ENCODE measurements at regions of chr16 and their contacts with region 1.

Region 1: GRCh38 chr16:2267913-2268666 is at the start of gene RNPS1:
- DNase-seq: peak; percentile 93 to 98 (median 96)
- ATAC-seq: peak; percentile 92
- H3K4me3 ChIP-seq: peak within 1 kb of the TSS; percentile 99
- H3K4me3 Mint-ChIP-seq: peak within 1 kb of the TSS; percentile 93 to 98 (median 95)
- H3K27ac ChIP-seq: peak within 1 kb of the TSS; percentile 91
- H3K27ac Mint-ChIP-seq: peak within 1 kb of the TSS; percentile 95 to 99 (median 98)
- H3K4me1 ChIP-seq: peaks cover 13 to 15% of the 10 kb centered on the region in 2 donors
- H3K4me1 Mint-ChIP-seq: peaks cover 15 to 42% (median 35%) of the 10 kb centered on the region in 7 donors
- H3K27me3 ChIP-seq: no peaks in the 10 kb centered on the region
- H3K27me3 Mint-ChIP-seq: peaks cover 0 to 2% (median 0%) of the 10 kb centered on the region in 5 donors
- total RNA-seq, gene RNPS1: 136 to 250 (median 220) TPM

Region 2: DNA sequence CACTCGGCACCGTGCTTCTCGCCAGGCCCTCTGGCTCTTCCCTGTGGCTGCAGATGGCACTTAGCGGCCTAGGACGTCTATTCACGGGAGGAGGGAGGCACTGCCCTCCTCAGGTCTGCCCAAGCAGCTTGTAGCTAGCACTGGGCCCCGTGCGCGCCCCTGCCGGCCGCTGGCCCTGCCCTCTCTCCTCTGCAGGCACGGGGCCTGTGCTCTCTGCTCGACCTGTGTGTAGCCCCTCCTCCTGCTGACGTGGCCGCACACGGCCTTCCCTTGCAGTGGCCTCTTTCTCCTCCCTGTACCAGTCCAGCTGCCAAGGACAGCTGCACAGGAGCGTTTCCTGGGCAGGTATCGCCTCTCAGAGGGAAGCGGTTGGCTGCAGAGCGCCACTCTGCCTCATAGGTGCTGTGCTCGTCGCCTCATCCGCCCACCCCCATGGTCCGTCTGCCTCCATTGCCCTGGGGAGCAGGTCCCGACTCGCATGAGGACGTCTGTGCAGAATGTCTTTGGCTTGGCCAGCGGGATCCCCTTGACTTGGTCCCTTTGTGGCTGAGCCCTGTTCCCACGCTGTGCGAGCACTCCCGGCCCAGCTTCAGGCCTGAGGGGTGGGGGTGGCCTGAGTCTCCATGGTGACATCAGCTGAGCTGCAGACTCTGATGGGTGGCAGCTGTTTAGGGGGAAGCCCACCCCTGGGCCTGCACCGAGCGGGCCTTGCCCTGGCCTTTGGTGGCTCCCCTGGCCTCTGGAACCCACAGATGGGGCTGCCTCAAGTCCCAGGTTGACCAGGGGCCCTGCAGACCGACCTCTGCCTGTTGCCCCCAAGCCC is 185.7 kb before region 1 on chr16:
- CTCF ChIA-PET with region 1: no interaction called
- POLR2A ChIA-PET with region 1: no interaction called
- intact Hi-C with region 1: no loop called
- DNase-seq: no peak
- ATAC-seq: no peak
- H3K4me3 ChIP-seq: no peak overlapping the region
- H3K4me3 Mint-ChIP-seq: no peak overlapping the region
- H3K27ac ChIP-seq: no peak overlapping the region
- H3K27ac Mint-ChIP-seq: peak overlapping the region in 1 of 9 donors; percentile 57
- H3K4me1 ChIP-seq: no peaks in the 10 kb centered on the region
- H3K4me1 Mint-ChIP-seq: peaks cover 0 to 2% (median 0%) of the 10 kb centered on the region in 7 donors
- H3K27me3 ChIP-seq: no peaks in the 10 kb centered on the region
- H3K27me3 Mint-ChIP-seq: no peaks in the 10 kb centered on the region

Region 3: GRCh38 chr16:2170080-2170479 is 98.0 kb before region 1 on chr16:
- CTCF ChIA-PET with region 1: no interaction called
- POLR2A ChIA-PET with region 1: no interaction called
- intact Hi-C with region 1: no loop called
- DNase-seq: no peak
- ATAC-seq: no peak
- H3K4me3 ChIP-seq: no peak overlapping the region
- H3K4me3 Mint-ChIP-seq: no peak overlapping the region
- H3K27ac ChIP-seq: no peak overlapping the region
- H3K27ac Mint-ChIP-seq: no peak overlapping the region
- H3K4me1 ChIP-seq: no peaks in the 10 kb centered on the region
- H3K4me1 Mint-ChIP-seq: peaks cover 0 to 4% (median 0%) of the 10 kb centered on the region in 7 donors
- H3K27me3 ChIP-seq: no peaks in the 10 kb centered on the region
- H3K27me3 Mint-ChIP-seq: no peaks in the 10 kb centered on the region

Region 4: DNA sequence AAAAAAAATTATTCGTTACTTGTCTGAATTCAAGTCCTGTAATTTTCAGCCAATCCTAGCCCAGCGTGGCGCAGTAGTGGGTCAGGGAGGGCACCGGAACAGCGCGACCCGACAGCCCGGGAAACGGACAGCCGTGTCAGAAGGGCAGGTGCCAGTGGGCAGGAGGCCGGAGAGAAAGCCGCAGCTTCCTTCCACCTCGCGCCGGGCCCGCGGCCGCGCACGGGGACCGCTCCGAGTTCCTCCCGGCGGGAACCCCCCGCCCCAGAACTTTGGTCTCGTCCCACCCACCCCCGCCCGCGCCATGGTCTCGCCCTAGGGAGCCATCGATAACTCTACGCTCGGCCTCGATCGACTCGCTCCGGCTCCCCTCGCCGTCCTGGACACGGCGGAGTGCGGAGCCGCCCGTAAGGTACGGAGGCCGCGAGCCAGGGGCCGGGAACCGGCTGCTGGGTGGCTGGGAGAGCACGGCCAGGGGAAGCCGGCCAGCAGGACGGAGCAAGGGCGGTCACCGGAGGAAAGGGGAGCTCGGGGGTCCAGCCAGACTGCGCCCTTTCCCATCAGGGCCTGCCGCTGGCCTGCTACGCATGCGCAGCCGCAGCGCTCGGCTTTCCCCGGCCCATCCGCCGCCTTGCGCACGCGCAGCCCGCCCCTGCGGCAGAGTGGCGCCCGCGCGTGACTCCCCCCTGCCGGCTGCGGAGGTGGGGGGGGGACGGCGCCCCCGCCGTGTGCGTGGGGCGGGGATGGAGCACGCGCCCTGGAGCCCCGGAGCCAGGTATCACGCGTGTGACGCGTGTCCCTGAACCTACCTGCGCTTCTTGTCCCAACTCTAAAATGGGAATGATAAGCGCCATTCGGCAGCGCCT is 62.8 kb before region 1 on chr16 and contains the start of gene MLST8:
- CTCF ChIA-PET with region 1: no interaction called
- POLR2A ChIA-PET with region 1: interaction called, 6 read pairs
- intact Hi-C with region 1: loop called (anchors 1 to 10 kb)
- DNase-seq: peak; percentile 88 to 100 (median 98)
- ATAC-seq: peak; percentile 97
- H3K4me3 ChIP-seq: peak within 1 kb of the TSS; percentile 93
- H3K4me3 Mint-ChIP-seq: peak within 1 kb of the TSS; percentile 80 to 95 (median 88)
- H3K27ac ChIP-seq: peak within 1 kb of the TSS; percentile 97
- H3K27ac Mint-ChIP-seq: peak within 1 kb of the TSS; percentile 70 to 91 (median 86)
- H3K4me1 ChIP-seq: peaks cover 11 to 13% of the 10 kb centered on the region in 2 donors
- H3K4me1 Mint-ChIP-seq: peaks cover 7 to 29% (median 21%) of the 10 kb centered on the region in 7 donors
- H3K27me3 ChIP-seq: no peaks in the 10 kb centered on the region
- H3K27me3 Mint-ChIP-seq: peaks cover 0 to 11% (median 0%) of the 10 kb centered on the region in 5 donors
- total RNA-seq, gene MLST8: 25.1 to 41.2 (median 35.5) TPM

Region 5: GRCh38 chr16:2251483-2252240 is 16.4 kb before region 1 on chr16 and contains the start of gene ECI1:
- CTCF ChIA-PET with region 1: no interaction called
- POLR2A ChIA-PET with region 1: interaction called, 6 read pairs
- intact Hi-C with region 1: loop called (anchors 1 kb)
- DNase-seq: peak; percentile 48 to 90 (median 62)
- ATAC-seq: peak; percentile 91
- H3K4me3 ChIP-seq: peak within 1 kb of the TSS; percentile 62
- H3K4me3 Mint-ChIP-seq: peak within 1 kb of the TSS; percentile 85 to 94 (median 89)
- H3K27ac ChIP-seq: peak within 1 kb of the TSS; percentile 76
- H3K27ac Mint-ChIP-seq: peak within 1 kb of the TSS; percentile 85 to 94 (median 91)
- H3K4me1 ChIP-seq: peaks cover 7% of the 10 kb centered on the region in 2 donors
- H3K4me1 Mint-ChIP-seq: peaks cover 0 to 12% (median 7%) of the 10 kb centered on the region in 7 donors
- H3K27me3 ChIP-seq: no peaks in the 10 kb centered on the region
- H3K27me3 Mint-ChIP-seq: no peaks in the 10 kb centered on the region
- total RNA-seq, gene ECI1: 19.9 to 29.3 (median 26.8) TPM

Region 6: GRCh38 chr16:2474877-2475412 is 206.9 kb after region 1 on chr16 and contains the start of gene TBC1D24:
- CTCF ChIA-PET with region 1: no interaction called
- POLR2A ChIA-PET with region 1: no interaction called
- intact Hi-C with region 1: loop called in 1 of 2 experiments (anchors 5 kb)
- DNase-seq: peak; percentile 41 to 94 (median 65)
- ATAC-seq: peak; percentile 80
- H3K4me3 ChIP-seq: peak within 1 kb of the TSS; percentile 71
- H3K4me3 Mint-ChIP-seq: peak within 1 kb of the TSS; percentile 61 to 81 (median 73)
- H3K27ac ChIP-seq: peak within 1 kb of the TSS; percentile 66
- H3K27ac Mint-ChIP-seq: no peak within 1 kb of the TSS
- H3K4me1 ChIP-seq: peaks cover 11 to 12% of the 10 kb centered on the region in 2 donors
- H3K4me1 Mint-ChIP-seq: peaks cover 14 to 34% (median 17%) of the 10 kb centered on the region in 7 donors
- H3K27me3 ChIP-seq: peaks cover 4 to 14% of the 10 kb centered on the region in 2 donors
- H3K27me3 Mint-ChIP-seq: peaks cover 7 to 31% (median 13%) of the 10 kb centered on the region in 5 donors
- total RNA-seq, gene TBC1D24: 5.4 to 13.5 (median 9.2) TPM

Region 7: DNA sequence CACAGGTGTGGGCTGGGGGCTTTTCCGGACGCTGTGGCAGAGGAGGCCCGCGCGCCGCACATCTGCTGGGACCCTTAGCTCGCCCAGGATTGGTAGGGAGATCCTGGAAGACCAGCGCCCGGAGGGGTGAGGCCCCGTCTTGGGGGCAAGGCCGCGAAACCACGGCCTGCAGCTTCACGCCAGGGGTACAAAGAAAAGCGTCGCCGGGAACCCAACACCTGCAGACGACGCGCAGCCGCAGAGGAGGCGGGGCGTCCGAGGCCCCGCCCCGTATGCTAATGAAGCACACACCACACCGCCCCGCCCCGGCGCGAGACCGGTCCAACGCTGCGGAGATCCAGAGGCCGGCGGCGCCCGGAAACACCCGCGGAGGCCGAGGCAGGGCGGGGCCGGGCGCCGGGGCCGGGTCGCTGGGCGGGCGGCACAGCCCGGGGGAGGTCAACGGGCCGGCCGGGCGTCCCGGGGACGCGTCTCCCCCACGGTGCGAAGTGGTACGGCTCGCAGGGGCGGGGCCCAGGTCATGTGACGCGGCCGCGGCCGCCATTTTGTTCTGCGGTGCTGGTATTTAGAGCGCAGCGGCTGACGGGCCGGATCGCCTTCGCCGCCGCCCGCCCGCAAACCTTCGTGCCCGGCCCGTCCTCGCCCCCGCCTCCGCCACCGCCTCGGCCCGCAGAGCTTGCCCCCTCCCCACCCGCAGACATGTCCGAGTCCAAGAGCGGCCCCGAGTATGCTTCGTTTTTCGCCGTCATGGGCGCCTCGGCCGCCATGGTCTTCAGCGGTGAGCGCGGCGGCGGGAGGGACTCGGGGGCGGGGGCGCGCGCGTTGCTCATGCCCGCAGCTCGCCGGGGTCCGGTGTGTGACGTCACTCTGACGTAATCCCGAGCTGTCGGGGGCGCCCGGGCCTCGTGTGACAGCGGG is 245.6 kb after region 1 on chr16 and contains the start of gene ATP6V0C:
- CTCF ChIA-PET with region 1: no interaction called
- POLR2A ChIA-PET with region 1: interaction called, 3 read pairs
- intact Hi-C with region 1: loop called (anchors 1 kb)
- DNase-seq: peak; percentile 89 to 98 (median 94)
- ATAC-seq: peak; percentile 87
- H3K4me3 ChIP-seq: peak within 1 kb of the TSS; percentile 71
- H3K4me3 Mint-ChIP-seq: peak within 1 kb of the TSS; percentile 85 to 94 (median 91)
- H3K27ac ChIP-seq: peak within 1 kb of the TSS; percentile 100
- H3K27ac Mint-ChIP-seq: peak within 1 kb of the TSS; percentile 90 to 98 (median 96)
- H3K4me1 ChIP-seq: peaks cover 31 to 44% of the 10 kb centered on the region in 2 donors
- H3K4me1 Mint-ChIP-seq: peaks cover 36 to 60% (median 48%) of the 10 kb centered on the region in 7 donors
- H3K27me3 ChIP-seq: no peaks in the 10 kb centered on the region
- H3K27me3 Mint-ChIP-seq: peaks cover 0 to 3% (median 0%) of the 10 kb centered on the region in 5 donors
- total RNA-seq, gene ATP6V0C: 98.2 to 303 (median 113) TPM